Activated CD4-positive, alpha-beta T cell treated with anti-CD3 and anti-CD28 coated beads, Interleukin-2, amount 10 ng/mL, durations not matched to agents 7 days and 5 days (primary cell): ENCODE measurements at regions of chr15 and their contacts with region 1.

Region 1: GRCh38 chr15:56232058-56232457 is 11.6 kb downstream of the RFX7 start:
- DNase-seq: no peak
- H3K4me3 Mint-ChIP-seq: no peak overlapping the region
- H3K27ac Mint-ChIP-seq: no peak overlapping the region
- H3K4me1 Mint-ChIP-seq: peaks cover 23% of the 10 kb centered on the region
- H3K27me3 Mint-ChIP-seq: no peaks in the 10 kb centered on the region

Region 2: DNA sequence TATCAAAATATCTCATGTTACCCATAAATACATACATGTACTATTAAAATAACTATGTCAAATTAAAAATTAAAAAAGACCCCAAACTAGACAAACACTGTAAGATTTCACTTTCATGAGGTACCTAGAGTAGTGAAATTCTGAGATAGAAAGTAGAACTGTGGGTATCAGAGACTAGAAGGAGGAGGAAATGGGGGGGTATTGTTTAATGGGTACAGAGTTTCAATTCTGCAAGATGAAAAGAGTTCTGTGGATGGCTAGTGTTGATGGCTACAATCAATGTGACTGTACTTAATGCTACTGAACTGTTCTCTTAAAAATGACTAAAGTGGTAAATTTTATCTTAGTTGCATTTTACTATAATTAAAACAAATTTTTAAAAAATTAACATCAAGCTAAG is 25.0 kb before region 1 on chr15:
- CTCF ChIA-PET with region 1: no interaction called
- POLR2A ChIA-PET with region 1: no interaction called
- DNase-seq: no peak
- H3K4me3 Mint-ChIP-seq: no peak overlapping the region
- H3K27ac Mint-ChIP-seq: peak overlapping the region; percentile 79
- H3K4me1 Mint-ChIP-seq: peaks cover 71% of the 10 kb centered on the region
- H3K27me3 Mint-ChIP-seq: no peaks in the 10 kb centered on the region

Region 3: GRCh38 chr15:56245871-56246814 is 14.1 kb after region 1 on chr15:
- CTCF ChIA-PET with region 1: interaction called, 13 read pairs
- POLR2A ChIA-PET with region 1: no interaction called
- DNase-seq: peak; percentile 89
- H3K4me3 Mint-ChIP-seq: peak overlapping the region; percentile 88
- H3K27ac Mint-ChIP-seq: peak overlapping the region; percentile 96
- H3K4me1 Mint-ChIP-seq: peaks cover 30% of the 10 kb centered on the region
- H3K27me3 Mint-ChIP-seq: peaks cover 3% of the 10 kb centered on the region

Region 4: DNA sequence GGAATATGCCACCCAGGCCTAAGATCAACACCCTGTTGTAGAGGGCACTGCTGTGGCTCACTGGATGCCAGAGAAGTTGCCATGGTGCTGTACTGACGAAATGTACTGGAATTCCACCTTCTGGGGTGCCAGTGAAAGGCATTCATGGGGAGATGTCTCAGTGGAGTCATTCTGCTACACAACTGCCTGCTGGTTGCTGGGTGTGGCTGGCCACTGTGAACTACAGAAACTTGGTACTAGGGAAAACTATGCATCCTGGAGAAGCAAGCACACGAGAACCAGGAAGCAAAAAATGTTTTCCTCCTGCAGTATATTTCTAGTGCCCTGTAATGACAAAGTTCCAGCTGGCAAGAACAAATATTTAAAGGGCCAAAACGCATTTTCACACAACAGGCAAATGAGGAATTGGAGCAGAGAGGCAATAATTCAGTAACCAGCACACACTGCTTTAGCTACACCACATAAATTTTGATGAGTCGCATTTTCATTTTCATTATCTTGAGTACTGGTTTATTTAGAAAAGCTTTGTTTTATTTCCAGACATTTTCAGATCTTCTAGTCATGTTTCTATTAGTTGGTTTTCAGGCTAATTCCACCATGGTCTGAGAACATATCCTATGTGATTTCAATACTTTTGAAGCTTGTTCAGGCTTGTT is 29.9 kb after region 1 on chr15:
- CTCF ChIA-PET with region 1: no interaction called
- POLR2A ChIA-PET with region 1: no interaction called
- DNase-seq: no peak
- H3K4me3 Mint-ChIP-seq: no peak overlapping the region
- H3K27ac Mint-ChIP-seq: no peak overlapping the region
- H3K4me1 Mint-ChIP-seq: peaks cover 7% of the 10 kb centered on the region
- H3K27me3 Mint-ChIP-seq: peaks cover 18% of the 10 kb centered on the region